Right ventricle myocardium inferior (tissue), 1 donor: ENCODE measurements at regions of chr16 and their contacts with region 1.

Region 1: GRCh38 chr16:4957720-4958509 is at the start of gene SEC14L5:
- DNase-seq: peak; percentile 98
- ATAC-seq: peak; percentile 98
- total RNA-seq, gene SEC14L5: 23.5 TPM

Region 2: DNA sequence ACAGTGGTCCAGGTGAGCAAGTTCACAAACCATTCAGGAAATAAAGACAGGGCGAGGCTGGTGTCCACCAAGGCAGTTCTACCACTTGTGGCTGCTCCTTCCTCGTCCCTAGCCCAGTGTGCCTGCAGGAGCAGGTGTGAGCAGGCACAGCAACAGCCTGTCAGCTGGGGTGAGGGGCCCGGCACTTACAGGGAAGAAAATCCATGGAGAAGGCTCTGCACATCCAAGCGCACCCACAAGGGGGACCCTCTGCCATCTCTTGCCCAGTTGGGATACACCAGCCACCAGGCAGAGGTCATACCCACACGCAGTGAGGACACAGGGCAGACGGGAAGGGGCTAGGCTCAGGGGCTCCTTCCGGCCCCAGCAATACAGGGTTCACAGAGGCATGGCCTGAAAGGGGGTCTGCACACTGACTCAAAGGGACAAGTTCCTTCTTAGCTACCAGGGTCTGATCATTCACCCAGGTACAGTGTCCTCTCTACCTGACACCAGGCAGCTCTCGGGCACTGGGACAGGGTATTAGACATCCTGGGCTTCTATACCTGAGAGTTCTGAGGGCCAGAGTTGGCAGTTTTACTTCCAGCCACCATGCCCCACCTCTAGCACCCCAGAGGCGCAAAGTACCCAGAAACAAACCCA is 446.4 kb before region 1 on chr16:
- intact Hi-C with region 1: loop called (anchors 10 kb)
- DNase-seq: no peak
- ATAC-seq: peak; percentile 64

Region 3: DNA sequence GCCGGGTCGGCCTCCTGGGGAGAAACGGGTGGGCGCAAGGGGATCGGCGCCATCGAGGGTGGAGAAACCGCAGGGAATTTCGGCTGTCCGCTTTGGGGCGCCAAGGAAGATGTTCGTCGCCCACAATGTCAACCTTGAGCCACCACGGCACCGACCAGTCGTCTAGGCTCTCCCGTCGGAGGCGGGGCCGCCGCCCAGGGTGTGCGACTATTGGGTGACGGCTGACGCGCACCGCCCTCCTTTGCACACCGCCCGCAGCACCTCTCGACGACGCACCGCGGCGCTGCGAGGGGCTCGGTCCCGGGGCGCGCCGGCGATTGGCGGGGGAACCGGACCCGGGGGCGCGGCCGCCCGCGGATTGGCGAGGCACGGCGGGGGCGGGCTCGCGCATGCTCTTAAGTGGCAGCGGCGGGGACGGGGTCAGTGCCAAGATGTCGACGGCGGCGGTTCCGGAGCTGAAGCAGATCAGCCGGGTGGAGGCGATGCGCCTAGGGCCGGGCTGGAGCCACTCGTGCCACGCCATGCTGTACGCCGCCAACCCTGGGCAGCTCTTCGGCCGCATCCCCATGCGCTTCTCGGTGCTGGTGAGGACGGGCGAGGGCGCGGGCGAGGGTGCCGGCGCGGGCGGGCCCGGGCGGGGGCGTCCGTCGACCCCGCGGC is 264.5 kb before region 1 on chr16 and contains the start of gene NUDT16L1:
- intact Hi-C with region 1: loop called (anchors 10 kb)
- DNase-seq: peak; percentile 99
- ATAC-seq: peak; percentile 93
- total RNA-seq, gene NUDT16L1: 52.3 TPM

Region 4: GRCh38 chr16:4846891-4847773 is 110.8 kb before region 1 on chr16 and contains the starts of genes GLYR1 and UBN1:
- intact Hi-C with region 1: loop called (anchors 5 kb)
- DNase-seq: peak; percentile 100
- ATAC-seq: peak; percentile 98
- total RNA-seq, gene GLYR1: 88.8 TPM
- total RNA-seq, gene UBN1: 45.2 TPM

Region 5: GRCh38 chr16:5001571-5001970 is 43.7 kb after region 1 on chr16:
- intact Hi-C with region 1: no loop called
- DNase-seq: no peak
- ATAC-seq: no peak

Region 6: GRCh38 chr16:5025171-5025632 is 67.3 kb after region 1 on chr16:
- intact Hi-C with region 1: loop called (anchors 2 kb)
- DNase-seq: no peak
- ATAC-seq: peak; percentile 50